CD4-positive, alpha-beta T cell (primary cell): ENCODE measurements at regions of chr2 and their contacts with region 1.

Region 1: GRCh38 chr2:189347540-189347939 is 93.7 kb upstream of the WDR75 start:
- DNase-seq: peak in 7 of 14 experiments; percentile 2 to 69 (median 33)
- ATAC-seq: peak; percentile 68
- H3K4me3 ChIP-seq: no peak overlapping the region
- H3K4me3 Mint-ChIP-seq: no peak overlapping the region
- H3K27ac ChIP-seq: no peak overlapping the region
- H3K27ac Mint-ChIP-seq: no peak overlapping the region
- H3K4me1 ChIP-seq: no peaks in the 10 kb centered on the region
- H3K4me1 Mint-ChIP-seq: peaks cover 14% of the 10 kb centered on the region
- H3K27me3 ChIP-seq: no peaks in the 10 kb centered on the region
- H3K27me3 Mint-ChIP-seq: no peaks in the 10 kb centered on the region
- CTCF ChIP-seq: peak; percentile 51

Region 2: DNA sequence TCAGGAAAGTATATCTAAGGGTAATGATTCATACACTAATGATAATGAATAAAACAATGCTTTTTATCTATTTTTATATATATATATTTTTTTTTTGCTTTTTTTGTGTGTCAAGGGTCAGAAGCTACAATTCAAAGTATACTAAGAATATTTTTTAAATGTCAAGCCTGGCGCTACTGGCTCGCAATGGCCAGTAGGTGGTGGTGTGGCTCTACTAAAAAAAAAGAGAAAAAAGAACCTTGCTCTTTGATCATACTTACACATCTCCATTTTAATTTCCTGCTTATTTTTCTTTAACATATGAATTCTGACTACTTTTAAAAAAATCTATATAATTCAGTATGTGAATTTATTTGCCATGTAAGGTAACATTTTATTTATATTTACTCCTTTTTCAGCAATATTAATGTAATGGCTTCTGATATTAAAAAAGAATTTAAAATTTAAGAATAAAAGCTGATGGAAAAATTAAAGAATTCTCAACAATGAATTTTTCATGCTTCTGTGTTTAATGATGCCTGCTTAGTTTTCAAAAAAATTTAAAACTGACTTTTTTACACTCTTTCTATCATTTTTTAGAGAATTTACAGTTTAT is 822.9 kb before region 1 on chr2:
- CTCF ChIA-PET with region 1: no interaction called
- POLR2A ChIA-PET with region 1: no interaction called
- intact Hi-C with region 1: loop called in 1 of 2 experiments (anchors 5 kb)
- DNase-seq: peak in 5 of 14 experiments; percentile 1 to 42 (median 11)
- ATAC-seq: no peak
- H3K4me3 ChIP-seq: no peak overlapping the region
- H3K4me3 Mint-ChIP-seq: no peak overlapping the region
- H3K27ac ChIP-seq: no peak overlapping the region
- H3K27ac Mint-ChIP-seq: no peak overlapping the region
- H3K4me1 ChIP-seq: no peaks in the 10 kb centered on the region
- H3K4me1 Mint-ChIP-seq: no peaks in the 10 kb centered on the region
- H3K27me3 ChIP-seq: no peaks in the 10 kb centered on the region
- H3K27me3 Mint-ChIP-seq: peaks cover 4% of the 10 kb centered on the region
- CTCF ChIP-seq: peak; percentile 56

Region 3: DNA sequence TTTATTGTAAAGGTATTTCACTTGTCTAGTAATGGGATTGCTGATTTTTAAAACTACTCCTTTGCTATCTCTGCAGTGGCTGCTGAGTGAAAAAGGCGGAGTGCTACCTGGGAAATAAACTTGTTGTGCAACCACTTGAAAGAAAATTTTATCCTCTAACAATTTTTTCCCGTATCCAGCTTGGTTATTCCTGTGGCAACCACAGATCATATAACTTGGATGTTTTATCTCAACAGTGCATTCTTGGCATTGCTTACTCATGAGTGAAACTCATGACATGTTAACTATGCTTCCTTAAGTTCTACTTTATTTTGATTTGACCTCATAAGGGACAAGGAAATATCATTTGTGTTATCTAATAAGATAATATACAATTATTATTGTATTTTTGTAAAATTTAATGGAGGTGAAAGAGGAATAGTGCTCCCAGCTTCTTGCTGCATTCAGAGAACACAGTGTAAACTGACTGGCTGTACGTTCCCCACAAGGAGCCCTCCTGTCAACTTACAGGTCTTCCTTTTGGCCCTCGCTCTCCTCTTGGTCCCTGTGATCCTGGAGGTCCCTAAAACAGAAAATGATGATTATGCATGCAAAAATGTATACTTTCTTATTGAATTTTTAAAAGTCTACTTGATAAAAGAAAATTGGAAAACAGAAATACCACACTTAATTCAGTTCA is 250.6 kb before region 1 on chr2:
- CTCF ChIA-PET with region 1: no interaction called
- POLR2A ChIA-PET with region 1: no interaction called
- intact Hi-C with region 1: loop called (anchors 1 kb)
- DNase-seq: no peak
- ATAC-seq: no peak
- H3K4me3 ChIP-seq: no peak overlapping the region
- H3K4me3 Mint-ChIP-seq: no peak overlapping the region
- H3K27ac ChIP-seq: no peak overlapping the region
- H3K27ac Mint-ChIP-seq: no peak overlapping the region
- H3K4me1 ChIP-seq: no peaks in the 10 kb centered on the region
- H3K4me1 Mint-ChIP-seq: no peaks in the 10 kb centered on the region
- H3K27me3 ChIP-seq: no peaks in the 10 kb centered on the region
- H3K27me3 Mint-ChIP-seq: no peaks in the 10 kb centered on the region
- CTCF ChIP-seq: no peak

Region 4: GRCh38 chr2:189142893-189143759 is 204.4 kb before region 1 on chr2:
- CTCF ChIA-PET with region 1: interaction called, 4 read pairs
- POLR2A ChIA-PET with region 1: interaction called, 3 read pairs
- intact Hi-C with region 1: loop called (anchors 1 to 5 kb)
- DNase-seq: peak in 13 of 14 experiments; percentile 9 to 76 (median 30)
- ATAC-seq: peak; percentile 94
- H3K4me3 ChIP-seq: no peak overlapping the region
- H3K4me3 Mint-ChIP-seq: no peak overlapping the region
- H3K27ac ChIP-seq: no peak overlapping the region
- H3K27ac Mint-ChIP-seq: no peak overlapping the region
- H3K4me1 ChIP-seq: no peaks in the 10 kb centered on the region
- H3K4me1 Mint-ChIP-seq: no peaks in the 10 kb centered on the region
- H3K27me3 ChIP-seq: no peaks in the 10 kb centered on the region
- H3K27me3 Mint-ChIP-seq: no peaks in the 10 kb centered on the region
- CTCF ChIP-seq: peak; percentile 79

Region 5: GRCh38 chr2:189249171-189249570 is 98.4 kb before region 1 on chr2:
- CTCF ChIA-PET with region 1: no interaction called
- POLR2A ChIA-PET with region 1: no interaction called
- intact Hi-C with region 1: loop called in 1 of 2 experiments (anchors 5 kb)
- DNase-seq: no peak
- ATAC-seq: no peak
- H3K4me3 ChIP-seq: no peak overlapping the region
- H3K4me3 Mint-ChIP-seq: no peak overlapping the region
- H3K27ac ChIP-seq: no peak overlapping the region
- H3K27ac Mint-ChIP-seq: no peak overlapping the region
- H3K4me1 ChIP-seq: no peaks in the 10 kb centered on the region
- H3K4me1 Mint-ChIP-seq: no peaks in the 10 kb centered on the region
- H3K27me3 ChIP-seq: no peaks in the 10 kb centered on the region
- H3K27me3 Mint-ChIP-seq: no peaks in the 10 kb centered on the region
- CTCF ChIP-seq: no peak

Region 6: GRCh38 chr2:189648846-189649509 is 301.4 kb after region 1 on chr2:
- CTCF ChIA-PET with region 1: no interaction called
- POLR2A ChIA-PET with region 1: no interaction called
- intact Hi-C with region 1: no loop called
- DNase-seq: no peak
- ATAC-seq: no peak
- H3K4me3 ChIP-seq: no peak overlapping the region
- H3K4me3 Mint-ChIP-seq: no peak overlapping the region
- H3K27ac ChIP-seq: no peak overlapping the region
- H3K27ac Mint-ChIP-seq: no peak overlapping the region
- H3K4me1 ChIP-seq: no peaks in the 10 kb centered on the region
- H3K4me1 Mint-ChIP-seq: no peaks in the 10 kb centered on the region
- H3K27me3 ChIP-seq: no peaks in the 10 kb centered on the region
- H3K27me3 Mint-ChIP-seq: no peaks in the 10 kb centered on the region
- CTCF ChIP-seq: no peak